PC-9 (cell line): ENCODE measurements at regions of chr6 and their contacts with region 1.

Region 1: DNA sequence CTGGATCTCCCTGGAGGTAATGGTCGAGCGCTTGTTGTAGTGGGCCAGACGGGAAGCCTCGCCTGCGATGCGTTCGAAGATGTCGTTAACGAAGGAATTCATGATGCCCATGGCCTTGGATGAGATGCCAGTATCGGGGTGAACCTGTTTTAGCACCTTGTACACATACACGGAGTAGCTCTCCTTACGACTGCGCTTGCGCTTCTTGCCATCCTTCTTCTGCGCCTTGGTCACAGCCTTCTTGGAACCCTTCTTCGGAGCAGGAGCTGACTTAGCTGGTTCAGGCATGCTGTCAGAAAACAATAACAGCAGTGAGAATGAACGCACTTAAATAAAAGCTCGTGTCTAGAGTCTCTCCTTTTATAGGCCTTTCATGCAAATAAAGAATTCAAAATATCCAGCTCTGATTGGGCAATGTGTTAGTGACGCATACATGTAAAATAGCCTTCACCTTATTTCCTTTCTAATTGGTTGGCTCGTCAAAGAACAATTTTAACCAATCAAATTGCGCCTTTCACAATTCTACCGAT is 129.2 kb downstream of the HFE start:
- DNase-seq: peak; percentile 65 to 95
- H3K4me3 ChIP-seq: peak overlapping the region; percentile 72
- H3K27ac ChIP-seq: peak overlapping the region; percentile 80
- H3K4me1 ChIP-seq: 0 out of 2 replicates have a peak, but pooled peaks cover 14% of the 10 kb centered on the region
- H3K27me3 ChIP-seq: no peaks in the 10 kb centered on the region
- CTCF ChIP-seq: no peak

Region 2: GRCh38 chr6:26031595-26032339 is 184.7 kb before region 1 on chr6:
- CTCF ChIA-PET with region 1: no interaction called
- POLR2A ChIA-PET with region 1: interaction called, 10 read pairs
- intact Hi-C with region 1: no loop called
- DNase-seq: peak; percentile 91 to 95
- H3K4me3 ChIP-seq: peak overlapping the region; percentile 81
- H3K27ac ChIP-seq: peak overlapping the region; percentile 79
- H3K4me1 ChIP-seq: peaks cover 46% of the 10 kb centered on the region
- H3K27me3 ChIP-seq: no peaks in the 10 kb centered on the region
- CTCF ChIP-seq: no peak

Region 3: GRCh38 chr6:26131618-26132017 is 84.8 kb before region 1 on chr6:
- CTCF ChIA-PET with region 1: no interaction called
- POLR2A ChIA-PET with region 1: no interaction called
- intact Hi-C with region 1: no loop called
- DNase-seq: no peak
- H3K4me3 ChIP-seq: no peak overlapping the region
- H3K27ac ChIP-seq: no peak overlapping the region
- H3K4me1 ChIP-seq: peaks cover 35% of the 10 kb centered on the region
- H3K27me3 ChIP-seq: no peaks in the 10 kb centered on the region
- CTCF ChIP-seq: no peak

Region 4: GRCh38 chr6:26183581-26184366 is 32.6 kb before region 1 on chr6:
- CTCF ChIA-PET with region 1: no interaction called
- POLR2A ChIA-PET with region 1: interaction called, 17 read pairs
- intact Hi-C with region 1: no loop called
- DNase-seq: peak; percentile 72 to 87
- H3K4me3 ChIP-seq: peak overlapping the region; percentile 54
- H3K27ac ChIP-seq: peak overlapping the region; percentile 65
- H3K4me1 ChIP-seq: peaks cover 12% of the 10 kb centered on the region; the same call in 1 of the 2 replicates
- H3K27me3 ChIP-seq: no peaks in the 10 kb centered on the region
- CTCF ChIP-seq: no peak

Region 5: GRCh38 chr6:26204332-26205165 is 11.9 kb before region 1 on chr6:
- CTCF ChIA-PET with region 1: no interaction called
- POLR2A ChIA-PET with region 1: interaction called, 46 read pairs
- intact Hi-C with region 1: loop called (anchors 1 kb)
- DNase-seq: peak; percentile 91 to 94
- H3K4me3 ChIP-seq: peak overlapping the region; percentile 63
- H3K27ac ChIP-seq: peak overlapping the region; percentile 91
- H3K4me1 ChIP-seq: peaks cover 36% of the 10 kb centered on the region
- H3K27me3 ChIP-seq: no peaks in the 10 kb centered on the region
- CTCF ChIP-seq: 0 out of 2 replicates have a peak, but pooled peaks have one; percentile 20

Region 6: GRCh38 chr6:26243752-26244151 is 27.3 kb after region 1 on chr6:
- CTCF ChIA-PET with region 1: no interaction called
- POLR2A ChIA-PET with region 1: interaction called, 11 read pairs
- intact Hi-C with region 1: no loop called
- DNase-seq: no peak
- H3K4me3 ChIP-seq: no peak overlapping the region
- H3K27ac ChIP-seq: no peak overlapping the region
- H3K4me1 ChIP-seq: peaks cover 15% of the 10 kb centered on the region
- H3K27me3 ChIP-seq: no peaks in the 10 kb centered on the region
- CTCF ChIP-seq: no peak

Region 7: DNA sequence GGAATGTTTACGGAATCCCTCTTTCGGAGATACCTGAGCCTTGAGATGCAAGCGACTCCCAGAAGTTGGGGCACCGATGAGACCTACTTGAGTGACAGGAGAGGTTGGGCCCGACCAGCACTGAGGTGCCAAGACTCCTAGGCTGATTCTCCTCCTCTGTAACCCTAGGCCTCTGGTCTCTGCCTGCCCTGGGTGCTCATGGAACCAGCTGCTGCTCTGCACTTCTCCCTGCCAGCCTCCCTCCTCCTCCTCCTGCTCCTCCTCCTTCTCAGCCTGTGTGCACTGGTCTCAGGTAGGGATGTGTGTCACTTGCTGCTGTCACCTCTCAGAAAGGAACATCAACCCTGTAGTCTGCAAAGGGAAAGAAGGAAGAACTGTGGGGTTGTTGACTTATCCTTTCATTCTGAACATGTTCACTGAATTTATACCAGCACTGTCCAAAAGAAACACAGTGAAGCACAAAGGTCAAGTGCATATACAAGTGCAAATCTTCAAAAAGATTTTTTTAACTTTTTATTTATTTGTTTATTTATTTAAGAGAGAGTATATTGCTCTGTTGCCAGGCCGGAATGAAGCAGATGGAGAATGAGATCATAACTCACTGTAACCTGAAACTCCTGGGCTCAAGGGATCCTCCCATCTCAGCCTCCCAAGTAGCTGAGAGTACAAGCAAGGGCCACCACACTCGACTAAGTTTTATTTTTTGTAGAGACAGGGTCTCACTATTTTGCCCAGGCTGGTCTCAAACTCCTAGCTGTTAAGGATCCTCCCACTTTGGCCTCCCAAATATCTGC is 167.4 kb after region 1 on chr6:
- CTCF ChIA-PET with region 1: no interaction called
- POLR2A ChIA-PET with region 1: no interaction called
- intact Hi-C with region 1: no loop called
- DNase-seq: peak; percentile 28 to 55
- H3K4me3 ChIP-seq: peak overlapping the region; percentile 65
- H3K27ac ChIP-seq: peak overlapping the region; percentile 59
- H3K4me1 ChIP-seq: peaks cover 19% of the 10 kb centered on the region
- H3K27me3 ChIP-seq: no peaks in the 10 kb centered on the region
- CTCF ChIP-seq: no peak

Region 8: DNA sequence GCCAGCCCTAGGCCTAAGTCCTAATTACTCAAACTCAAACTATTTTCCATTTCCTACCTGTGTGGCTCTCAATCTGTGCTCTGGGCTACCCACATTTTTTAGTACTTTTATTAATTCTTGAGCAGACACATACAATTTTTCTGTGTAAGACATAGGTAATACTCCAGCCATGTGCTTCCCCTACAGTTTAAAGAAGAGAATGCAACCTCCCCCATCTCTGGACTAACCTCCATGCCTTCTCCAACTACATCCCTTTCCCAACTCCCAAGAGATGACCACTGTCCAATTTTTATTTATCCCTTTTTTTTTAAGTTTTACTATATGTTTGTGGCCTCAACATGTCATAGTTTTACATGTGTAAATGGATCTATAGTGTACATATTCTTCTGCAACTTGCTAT is 327.5 kb after region 1 on chr6:
- CTCF ChIA-PET with region 1: no interaction called
- POLR2A ChIA-PET with region 1: no interaction called
- intact Hi-C with region 1: loop called (anchors 5 kb)
- DNase-seq: no peak
- H3K4me3 ChIP-seq: no peak overlapping the region
- H3K27ac ChIP-seq: no peak overlapping the region
- H3K4me1 ChIP-seq: peaks cover 9% of the 10 kb centered on the region
- H3K27me3 ChIP-seq: no peaks in the 10 kb centered on the region
- CTCF ChIP-seq: peak; percentile 41

Region 9: DNA sequence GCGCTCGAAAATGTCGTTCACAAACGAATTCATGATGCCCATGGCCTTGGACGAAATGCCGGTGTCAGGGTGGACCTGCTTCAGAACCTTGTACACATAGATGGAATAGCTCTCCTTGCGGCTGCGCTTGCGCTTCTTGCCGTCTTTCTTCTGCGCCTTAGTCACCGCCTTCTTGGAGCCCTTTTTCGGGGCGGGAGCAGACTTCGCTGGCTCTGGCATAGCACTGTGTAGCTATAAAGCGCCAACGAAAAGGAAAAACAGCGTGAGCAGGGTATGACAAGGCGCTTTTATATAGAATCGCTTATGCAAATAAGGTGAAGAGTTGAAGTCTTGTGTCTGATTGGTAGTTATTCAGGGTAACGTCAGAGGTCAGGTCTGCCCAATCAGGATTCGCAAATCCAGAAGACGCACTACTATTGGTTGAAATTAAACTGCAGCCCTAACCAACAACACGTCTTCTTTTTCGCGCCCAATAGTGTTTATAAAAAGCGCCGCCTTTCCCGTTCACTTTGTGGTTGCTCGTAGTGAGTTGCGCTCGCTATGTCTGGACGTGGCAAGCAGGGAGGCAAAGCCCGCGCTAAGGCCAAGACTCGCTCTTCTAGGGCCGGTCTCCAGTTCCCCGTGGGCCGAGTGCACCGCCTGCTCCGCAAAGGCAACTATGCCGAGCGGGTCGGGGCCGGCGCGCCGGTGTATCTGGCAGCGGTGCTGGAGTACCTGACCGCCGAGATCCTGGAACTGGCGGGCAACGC is 916.3 kb after region 1 on chr6:
- CTCF ChIA-PET with region 1: no interaction called
- POLR2A ChIA-PET with region 1: interaction called, 14 read pairs
- intact Hi-C with region 1: no loop called
- DNase-seq: peak; percentile 95 to 98
- H3K4me3 ChIP-seq: peak overlapping the region; percentile 74
- H3K27ac ChIP-seq: peak overlapping the region; percentile 80
- H3K4me1 ChIP-seq: peaks cover 16% of the 10 kb centered on the region
- H3K27me3 ChIP-seq: no peaks in the 10 kb centered on the region
- CTCF ChIP-seq: no peak